CD14-positive monocyte (primary cell): ENCODE measurements at regions of chr2 and their contacts with region 1.

Region 1: DNA sequence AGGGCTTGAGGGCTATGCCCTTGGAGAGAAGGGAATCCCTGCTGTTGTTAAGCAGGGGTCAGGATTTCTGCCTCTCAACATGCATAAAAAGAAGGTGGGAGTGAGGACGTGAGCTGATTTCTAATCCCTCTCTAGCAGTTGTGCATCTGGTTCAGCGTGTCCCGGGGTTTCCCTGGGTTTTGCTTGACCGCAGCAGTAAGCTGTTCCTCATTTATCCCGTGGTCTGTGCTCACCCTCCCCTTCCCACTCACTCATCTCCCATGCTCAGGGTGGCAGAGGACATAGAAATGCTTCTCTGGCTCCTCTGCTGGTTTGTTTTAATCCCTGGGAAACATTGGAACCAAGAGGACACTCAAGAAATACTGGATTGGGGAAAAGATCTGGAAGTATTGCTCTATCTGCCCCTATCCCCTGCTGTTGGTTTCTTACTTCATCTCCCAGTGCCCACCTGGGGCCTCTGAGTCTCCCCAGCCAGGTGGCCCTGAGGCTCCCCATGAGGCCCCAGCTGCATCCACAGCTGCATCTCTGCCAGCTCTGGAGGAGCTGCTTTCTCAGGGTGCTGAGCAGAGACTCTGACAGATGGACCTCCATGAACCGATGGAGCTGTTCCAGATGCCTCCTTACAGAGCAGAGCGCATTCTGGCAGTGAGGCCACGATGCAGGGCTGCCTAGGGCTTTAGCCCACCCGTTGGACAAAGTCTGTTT is 36.1 kb downstream of the TET3 start:
- DNase-seq: peak; percentile 56 to 89 (median 71)
- H3K4me3 ChIP-seq: no peak overlapping the region
- H3K4me3 Mint-ChIP-seq: peak overlapping the region; percentile 4 to 46
- H3K27ac ChIP-seq: peak overlapping the region; percentile 2 to 73
- H3K27ac Mint-ChIP-seq: peak overlapping the region; percentile 70 to 89 (median 77)
- H3K4me1 ChIP-seq: peaks cover 32 to 42% of the 10 kb centered on the region in 2 donors
- H3K4me1 Mint-ChIP-seq: peaks cover 53% of the 10 kb centered on the region
- H3K27me3 ChIP-seq: no peaks in the 10 kb centered on the region
- H3K27me3 Mint-ChIP-seq: no peaks in the 10 kb centered on the region
- CTCF ChIP-seq: no peak

Region 2: DNA sequence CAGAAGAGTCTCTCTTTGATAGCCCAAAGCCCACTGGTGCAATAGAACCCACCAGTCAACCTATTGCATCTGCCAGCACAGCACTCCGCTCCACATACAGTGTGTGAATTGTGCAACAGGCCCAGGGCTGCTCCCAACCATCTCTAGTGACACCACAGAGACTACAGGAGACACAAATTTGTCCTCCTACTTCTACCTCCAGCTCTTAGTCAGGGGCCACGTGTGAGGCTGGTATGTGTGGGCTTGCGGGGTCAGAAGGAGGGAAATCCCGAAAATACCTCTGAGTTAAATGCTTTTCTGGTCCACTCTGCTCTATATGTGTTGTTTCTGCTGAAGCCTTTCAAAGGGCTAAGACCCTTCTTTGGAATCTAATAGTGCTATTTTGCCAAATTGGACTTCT is 76.1 kb before region 1 on chr2:
- intact Hi-C with region 1: loop called in 1 of 2 experiments (anchors 5 kb)
- DNase-seq: no peak
- H3K4me3 ChIP-seq: no peak overlapping the region
- H3K4me3 Mint-ChIP-seq: no peak overlapping the region
- H3K27ac ChIP-seq: peak overlapping the region in 1 of 2 donors; percentile 33
- H3K27ac Mint-ChIP-seq: peak overlapping the region in 3 of 7 donors; percentile 6 to 57 (median 34)
- H3K4me1 ChIP-seq: peaks cover 36% of the 10 kb centered on the region in 2 donors
- H3K4me1 Mint-ChIP-seq: peaks cover 49% of the 10 kb centered on the region
- H3K27me3 ChIP-seq: no peaks in the 10 kb centered on the region
- H3K27me3 Mint-ChIP-seq: no peaks in the 10 kb centered on the region
- CTCF ChIP-seq: no peak